ENCODE measurements at regions of chr5 and their contacts with region 1.

Region 1: DNA sequence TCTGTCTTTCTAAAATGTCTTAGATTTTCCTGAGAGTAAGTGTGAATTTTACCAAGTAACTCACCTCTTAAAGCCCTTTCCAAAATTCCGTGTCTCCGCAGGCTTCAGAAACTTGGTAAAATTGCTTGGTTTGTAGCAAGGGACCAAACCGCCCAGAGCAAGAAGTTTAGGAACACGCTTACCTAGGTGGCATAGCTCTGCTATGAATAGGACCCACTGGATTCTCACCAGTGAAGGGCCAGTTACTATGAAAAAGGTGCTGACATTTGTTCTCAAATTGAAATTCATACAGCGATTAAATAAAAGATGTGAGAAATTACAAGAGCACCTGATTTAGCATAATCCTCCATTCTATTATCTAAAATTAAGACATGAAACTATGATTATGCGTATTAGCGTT is 6.7 kb downstream of the NME5 start:
- DNase-seq: no peak
- H3K4me3 Mint-ChIP-seq: no peak overlapping the region
- H3K27ac Mint-ChIP-seq: no peak overlapping the region
- H3K4me1 Mint-ChIP-seq: peaks cover 5% of the 10 kb centered on the region
- H3K27me3 Mint-ChIP-seq: peaks cover 12% of the 10 kb centered on the region

Region 2: DNA sequence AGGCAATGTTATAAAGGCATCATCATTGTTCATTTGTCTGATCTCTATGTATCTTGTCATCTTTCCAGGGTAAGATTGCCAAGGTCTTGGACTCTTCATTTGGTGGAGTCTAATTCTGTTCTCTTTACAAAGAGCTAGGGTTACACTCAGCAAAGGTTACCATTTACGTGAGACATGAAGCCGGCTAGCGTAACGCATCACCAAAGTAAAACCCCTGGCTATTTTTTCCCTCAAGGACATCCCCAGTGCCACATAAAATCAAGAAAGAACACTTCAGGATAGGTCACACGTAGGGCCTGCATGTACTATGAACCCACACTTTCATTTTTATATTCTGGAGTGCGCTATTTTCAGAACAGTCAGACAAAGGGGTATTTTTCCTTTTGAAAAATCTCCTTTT is 284.9 kb before region 1 on chr5:
- CTCF ChIA-PET with region 1: no interaction called
- POLR2A ChIA-PET with region 1: no interaction called
- DNase-seq: no peak
- H3K4me3 Mint-ChIP-seq: no peak overlapping the region
- H3K27ac Mint-ChIP-seq: no peak overlapping the region
- H3K4me1 Mint-ChIP-seq: peaks cover 4% of the 10 kb centered on the region
- H3K27me3 Mint-ChIP-seq: no peaks in the 10 kb centered on the region

Region 3: GRCh38 chr5:138077065-138077696 is 55.4 kb before region 1 on chr5:
- CTCF ChIA-PET with region 1: interaction called, 30 read pairs
- POLR2A ChIA-PET with region 1: interaction called, 3 read pairs
- DNase-seq: peak; percentile 56
- H3K4me3 Mint-ChIP-seq: no peak overlapping the region
- H3K27ac Mint-ChIP-seq: no peak overlapping the region
- H3K4me1 Mint-ChIP-seq: peaks cover 17% of the 10 kb centered on the region
- H3K27me3 Mint-ChIP-seq: no peaks in the 10 kb centered on the region

Region 4: DNA sequence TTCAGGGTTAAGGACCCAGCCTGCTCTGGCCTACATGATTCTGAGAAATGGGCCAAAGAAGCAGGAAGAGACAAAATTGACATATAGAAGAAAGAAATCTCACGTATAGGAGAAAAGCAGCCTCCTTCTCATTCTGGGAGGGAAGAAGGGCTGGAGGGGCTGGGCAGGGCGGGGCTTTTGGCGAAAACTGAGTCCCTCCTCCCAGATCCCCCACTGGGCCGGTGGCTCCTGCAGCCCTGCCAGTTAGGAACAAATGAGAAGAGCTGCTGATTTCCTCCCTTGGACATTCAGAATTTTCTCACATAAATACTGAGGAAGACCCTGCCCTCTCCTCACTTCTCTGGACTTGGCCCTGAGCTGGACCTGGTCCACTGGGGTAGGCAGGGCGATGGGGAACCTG is 48.8 kb before region 1 on chr5 and contains the start of gene WNT8A:
- CTCF ChIA-PET with region 1: interaction called, 30 read pairs
- POLR2A ChIA-PET with region 1: interaction called, 3 read pairs
- DNase-seq: no peak
- H3K4me3 Mint-ChIP-seq: no peak within 1 kb of the TSS
- H3K27ac Mint-ChIP-seq: no peak within 1 kb of the TSS
- H3K4me1 Mint-ChIP-seq: peaks cover 18% of the 10 kb centered on the region
- H3K27me3 Mint-ChIP-seq: no peaks in the 10 kb centered on the region
- total RNA-seq, gene WNT8A: not detected

Region 5: DNA sequence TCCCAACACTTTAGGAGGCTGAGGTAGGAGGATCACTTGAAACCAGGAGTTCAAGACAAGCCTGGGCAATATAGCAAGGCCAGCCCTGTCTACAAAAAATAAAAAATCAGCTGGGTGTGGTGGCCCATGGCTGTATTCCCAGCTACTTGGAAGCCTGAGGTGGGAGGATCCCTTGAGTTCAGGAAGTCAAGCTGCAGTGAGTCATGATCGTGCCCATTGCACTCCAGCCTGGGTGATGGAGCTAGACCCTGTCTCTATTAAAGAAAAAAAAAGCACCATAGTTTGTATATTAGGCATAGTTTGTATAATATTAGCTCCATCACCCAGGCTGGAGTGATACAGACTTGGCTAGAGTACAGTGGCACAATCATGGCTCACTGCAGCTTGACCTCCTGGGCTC is 16.3 kb after region 1 on chr5:
- CTCF ChIA-PET with region 1: interaction called, 15 read pairs
- POLR2A ChIA-PET with region 1: no interaction called
- DNase-seq: no peak
- H3K4me3 Mint-ChIP-seq: no peak overlapping the region
- H3K27ac Mint-ChIP-seq: no peak overlapping the region
- H3K4me1 Mint-ChIP-seq: no peaks in the 10 kb centered on the region
- H3K27me3 Mint-ChIP-seq: no peaks in the 10 kb centered on the region